CD8-positive, alpha-beta T cell (primary cell): ENCODE measurements at regions of chr19 and their contacts with region 1.

Region 1: GRCh38 chr19:14006243-14006765 is at the start of gene RFX1:
- DNase-seq: peak; percentile 99 to 100 (median 100)
- ATAC-seq: peak; percentile 69
- H3K4me3 ChIP-seq: peak within 1 kb of the TSS; percentile 87 to 92
- H3K4me3 Mint-ChIP-seq: peak within 1 kb of the TSS; percentile 89
- H3K27ac ChIP-seq: peak within 1 kb of the TSS; percentile 99 to 100
- H3K27ac Mint-ChIP-seq: peak within 1 kb of the TSS; percentile 98
- H3K4me1 ChIP-seq: peaks cover 40% of the 10 kb centered on the region
- H3K4me1 Mint-ChIP-seq: peaks cover 42% of the 10 kb centered on the region
- H3K27me3 ChIP-seq: no peaks in the 10 kb centered on the region
- H3K27me3 Mint-ChIP-seq: no peaks in the 10 kb centered on the region
- CTCF ChIP-seq: no peak
- total RNA-seq, gene RFX1: 11.2 to 13.0 TPM

Region 2: DNA sequence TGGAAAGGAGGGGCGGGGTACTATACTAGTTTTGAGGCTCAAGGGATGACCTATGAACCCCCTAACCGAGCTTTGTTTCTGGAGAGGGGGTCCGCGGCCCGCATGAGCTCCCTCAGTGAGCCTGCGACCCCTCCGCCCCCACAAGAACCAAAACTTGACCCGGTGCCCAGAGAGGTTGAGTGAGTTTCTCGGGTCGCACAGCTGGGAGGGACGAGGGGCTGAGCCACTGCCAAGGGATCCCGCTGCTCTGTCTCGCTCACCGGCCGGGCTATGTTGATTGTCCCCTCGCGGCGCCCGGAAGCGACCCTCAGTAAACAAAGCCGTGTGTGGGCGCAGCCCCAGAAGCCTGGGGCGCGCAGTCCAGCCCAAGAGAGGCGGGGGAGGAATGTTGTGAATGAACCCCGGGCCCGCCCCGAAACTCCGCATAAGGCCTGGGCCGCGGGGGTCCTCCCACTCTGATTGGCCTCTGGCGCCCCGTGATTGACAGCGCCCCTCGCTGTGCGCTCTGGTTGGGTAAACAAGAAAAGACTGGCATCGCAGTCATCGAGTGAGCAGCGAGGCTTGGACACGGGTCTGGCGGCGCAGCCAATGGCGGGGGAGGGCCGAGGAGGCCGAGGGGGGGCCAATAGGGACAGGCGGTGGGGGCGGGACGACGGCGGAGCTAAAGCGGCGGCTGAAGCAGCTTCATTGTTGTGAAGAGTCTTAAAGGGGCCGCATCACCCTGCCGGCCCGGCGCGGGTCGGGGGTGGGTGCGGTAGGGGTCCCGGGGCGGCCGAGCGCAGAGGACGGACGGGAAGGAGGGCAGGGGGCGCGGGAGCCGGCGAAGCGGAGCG is 211.3 kb before region 1 on chr19 and contains the start of gene ZSWIM4:
- CTCF ChIA-PET with region 1: no interaction called
- POLR2A ChIA-PET with region 1: no interaction called
- intact Hi-C with region 1: loop called in 1 of 2 experiments (anchors 5 kb)
- DNase-seq: peak; percentile 83 to 96 (median 91)
- ATAC-seq: peak; percentile 85
- H3K4me3 ChIP-seq: peak within 1 kb of the TSS; percentile 73 to 80
- H3K4me3 Mint-ChIP-seq: peak within 1 kb of the TSS; percentile 92
- H3K27ac ChIP-seq: peak within 1 kb of the TSS; percentile 51 to 77
- H3K27ac Mint-ChIP-seq: peak within 1 kb of the TSS; percentile 89
- H3K4me1 ChIP-seq: peaks cover 27% of the 10 kb centered on the region
- H3K4me1 Mint-ChIP-seq: peaks cover 38% of the 10 kb centered on the region
- H3K27me3 ChIP-seq: no peaks in the 10 kb centered on the region
- H3K27me3 Mint-ChIP-seq: no peaks in the 10 kb centered on the region
- CTCF ChIP-seq: no peak
- total RNA-seq, gene ZSWIM4: 4.1 to 5.0 TPM

Region 3: DNA sequence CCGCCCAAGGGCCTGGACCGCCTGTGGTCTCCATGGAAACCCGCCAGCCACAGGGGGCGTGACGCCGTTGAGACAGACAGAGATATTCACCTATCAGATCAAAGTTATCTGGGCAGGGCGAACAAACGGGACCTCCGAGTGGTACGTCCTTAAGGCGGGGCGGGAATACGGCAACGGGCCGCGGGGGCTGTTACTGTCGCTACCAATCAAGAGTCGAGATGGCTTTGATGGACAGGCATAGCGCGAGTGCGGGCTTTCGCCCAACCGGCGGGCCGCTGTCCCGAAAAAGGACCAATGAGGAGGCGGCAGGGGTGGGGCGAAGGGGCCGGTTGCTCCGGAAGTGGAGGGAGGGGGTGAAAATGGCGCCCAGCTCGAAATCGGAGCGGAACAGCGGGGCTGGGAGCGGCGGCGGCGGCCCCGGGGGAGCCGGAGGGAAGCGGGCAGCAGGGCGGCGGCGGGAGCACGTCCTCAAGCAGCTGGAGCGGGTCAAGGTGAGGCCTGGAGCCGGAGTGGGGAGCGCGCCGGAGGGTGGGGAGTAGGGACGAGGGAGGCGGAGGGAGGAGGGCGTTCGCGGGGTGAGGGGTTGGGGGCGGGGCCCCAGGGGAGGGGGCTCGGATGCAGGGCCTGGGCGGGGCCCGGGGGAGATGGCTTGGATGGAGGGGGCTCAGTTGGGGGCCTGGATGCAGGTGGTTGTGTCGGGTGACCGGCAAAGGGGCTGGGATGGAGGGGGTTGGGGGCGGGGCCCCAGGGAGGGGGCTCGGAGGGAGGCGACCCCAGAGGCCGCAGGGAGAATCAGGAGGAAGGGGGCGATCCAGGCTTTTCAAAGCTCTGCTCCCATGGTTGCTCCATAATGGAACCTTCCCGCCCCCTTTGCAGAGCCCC is 53.9 kb before region 1 on chr19 and contains the start of gene DCAF15:
- CTCF ChIA-PET with region 1: interaction called, 4 read pairs
- POLR2A ChIA-PET with region 1: interaction called, 15 read pairs
- intact Hi-C with region 1: loop called (anchors 1 kb)
- DNase-seq: peak; percentile 96 to 100 (median 99)
- ATAC-seq: peak; percentile 96
- H3K4me3 ChIP-seq: peak within 1 kb of the TSS; percentile 63 to 73
- H3K4me3 Mint-ChIP-seq: peak within 1 kb of the TSS; percentile 96
- H3K27ac ChIP-seq: peak within 1 kb of the TSS; percentile 76 to 78
- H3K27ac Mint-ChIP-seq: peak within 1 kb of the TSS; percentile 92
- H3K4me1 ChIP-seq: peaks cover 14% of the 10 kb centered on the region
- H3K4me1 Mint-ChIP-seq: peaks cover 21% of the 10 kb centered on the region
- H3K27me3 ChIP-seq: no peaks in the 10 kb centered on the region
- H3K27me3 Mint-ChIP-seq: no peaks in the 10 kb centered on the region
- CTCF ChIP-seq: no peak
- total RNA-seq, gene DCAF15: 86.5 to 101 TPM

Region 4: DNA sequence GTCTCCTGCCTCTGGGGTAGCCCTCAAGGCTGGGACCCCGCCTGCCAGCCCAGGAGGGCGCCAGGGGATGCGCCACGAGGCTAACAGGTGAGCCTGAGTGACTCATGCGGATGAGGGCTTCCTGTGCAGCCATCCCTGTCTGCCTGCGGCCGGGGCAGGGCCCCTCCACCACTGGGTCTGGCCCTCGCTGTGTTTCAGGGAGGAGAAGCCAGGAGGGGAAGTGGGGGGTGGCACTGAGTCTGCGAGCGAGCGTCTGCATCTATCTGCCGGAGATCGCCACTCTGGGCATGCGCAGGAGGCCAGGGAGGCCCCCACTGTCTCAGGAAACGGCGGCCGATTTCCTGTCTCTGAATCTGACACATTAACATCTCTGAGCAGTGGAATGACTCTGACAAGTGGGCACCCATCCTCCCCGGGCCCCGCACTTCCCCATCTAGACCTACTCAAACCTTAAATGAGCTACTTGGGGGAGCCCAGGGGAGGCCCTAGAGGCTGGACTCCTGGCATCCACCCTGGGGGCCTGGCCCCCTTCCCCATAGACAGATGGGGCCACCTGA is 19.9 kb before region 1 on chr19:
- CTCF ChIA-PET with region 1: interaction called, 7 read pairs
- POLR2A ChIA-PET with region 1: interaction called, 12 read pairs
- intact Hi-C with region 1: loop called (anchors 1 kb)
- DNase-seq: peak; percentile 96 to 100 (median 99)
- ATAC-seq: peak; percentile 88
- H3K4me3 ChIP-seq: peak overlapping the region; percentile 24 to 59
- H3K4me3 Mint-ChIP-seq: peak overlapping the region; percentile 61
- H3K27ac ChIP-seq: peak overlapping the region; percentile 93 to 96
- H3K27ac Mint-ChIP-seq: peak overlapping the region; percentile 96
- H3K4me1 ChIP-seq: peaks cover 86% of the 10 kb centered on the region
- H3K4me1 Mint-ChIP-seq: peaks cover 86% of the 10 kb centered on the region
- H3K27me3 ChIP-seq: no peaks in the 10 kb centered on the region
- H3K27me3 Mint-ChIP-seq: no peaks in the 10 kb centered on the region
- CTCF ChIP-seq: no peak

Region 5: GRCh38 chr19:14073261-14073924 is 67.1 kb after region 1 on chr19:
- CTCF ChIA-PET with region 1: no interaction called
- POLR2A ChIA-PET with region 1: interaction called, 3 read pairs
- intact Hi-C with region 1: loop called (anchors 5 kb)
- DNase-seq: peak; percentile 55 to 89 (median 76)
- ATAC-seq: peak; percentile 74
- H3K4me3 ChIP-seq: peak overlapping the region; percentile 69 to 86
- H3K4me3 Mint-ChIP-seq: peak overlapping the region; percentile 90
- H3K27ac ChIP-seq: peak overlapping the region; percentile 42 to 65
- H3K27ac Mint-ChIP-seq: peak overlapping the region; percentile 90
- H3K4me1 ChIP-seq: peaks cover 30% of the 10 kb centered on the region
- H3K4me1 Mint-ChIP-seq: peaks cover 10% of the 10 kb centered on the region
- H3K27me3 ChIP-seq: peaks cover 0 to 2% of the 10 kb centered on the region in 2 experiments
- H3K27me3 Mint-ChIP-seq: no peaks in the 10 kb centered on the region
- CTCF ChIP-seq: no peak